Gastrocnemius medialis (tissue), 4 donors: ENCODE measurements at regions of chr4 and their contacts with region 1.

Region 1: DNA sequence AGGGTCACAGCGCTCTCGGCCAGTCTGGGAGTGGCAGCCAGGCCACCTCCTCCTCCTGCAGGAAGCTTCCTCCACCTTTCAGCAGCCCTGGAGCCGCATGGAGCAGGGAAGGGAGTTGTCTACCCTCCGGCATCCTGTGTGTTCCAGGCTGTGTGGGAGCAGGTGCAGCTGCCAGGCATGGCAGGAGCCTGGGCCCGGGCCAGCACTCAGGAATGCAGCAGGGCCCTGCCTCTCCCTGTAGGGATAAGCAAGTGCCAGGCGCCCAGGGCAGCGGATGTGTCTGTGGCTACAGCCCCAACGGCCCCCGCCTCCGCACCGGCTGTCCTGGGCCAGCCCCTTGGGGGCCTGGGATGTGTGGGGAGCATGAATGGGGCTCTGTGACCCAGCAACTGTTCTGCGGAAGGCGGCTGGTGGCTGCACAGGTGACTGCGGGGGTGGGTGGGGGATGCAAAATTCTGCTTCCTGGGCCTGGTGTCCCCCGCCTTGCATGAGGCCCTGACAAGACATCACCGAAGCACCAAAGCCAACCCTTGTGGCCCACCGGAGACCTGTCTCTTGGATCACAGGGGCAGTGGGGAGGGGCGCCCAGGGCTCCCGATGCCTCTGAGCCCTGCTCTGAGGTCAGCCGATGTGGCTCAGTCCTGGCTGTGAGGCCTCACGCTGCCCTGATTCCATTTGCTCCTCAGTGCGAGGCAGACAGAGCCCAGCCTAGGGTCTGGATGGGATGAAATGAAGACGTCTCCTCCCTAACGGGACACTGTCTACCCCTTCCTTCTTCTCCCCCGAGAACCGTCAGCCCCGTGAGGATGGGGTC is 1.4 kb upstream of the DOK7 start:
- DNase-seq: peak; percentile 70 to 95
- ATAC-seq: peak; percentile 43 to 53
- H3K4me3 ChIP-seq: no peak overlapping the region
- H3K27ac ChIP-seq: peak overlapping the region; percentile 94 to 98 (median 94)
- H3K4me1 ChIP-seq: peaks cover 31 to 48% of the 10 kb centered on the region in 2 donors
- H3K27me3 ChIP-seq: no peaks in the 10 kb centered on the region
- CTCF ChIP-seq: no peak
- POLR2A ChIP-seq: peak in 1 of 2 donors; percentile 26

Region 2: DNA sequence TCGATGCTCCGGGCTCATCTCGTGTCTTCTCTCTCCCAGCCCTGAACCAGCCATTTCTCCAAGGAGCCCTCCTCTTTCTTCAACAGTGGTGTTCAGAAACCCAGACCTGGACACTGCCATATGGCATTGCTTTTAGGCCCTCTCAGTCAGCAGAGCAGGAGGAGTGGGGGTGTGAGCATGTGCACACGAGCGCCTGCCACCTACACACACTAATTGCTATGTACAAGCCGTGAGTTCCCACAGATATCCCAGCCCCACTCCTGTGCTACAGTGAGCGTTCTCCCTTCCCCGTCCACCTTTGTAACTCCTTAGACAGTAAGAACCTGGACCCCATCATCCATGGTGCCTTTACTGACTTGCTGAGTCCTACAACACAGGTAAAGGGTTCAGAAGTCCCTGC is 759.3 kb before region 1 on chr4:
- in situ Hi-C with region 1: no loop called
- intact Hi-C with region 1: no loop called
- DNase-seq: no peak
- ATAC-seq: no peak
- H3K4me3 ChIP-seq: no peak overlapping the region
- H3K27ac ChIP-seq: no peak overlapping the region
- H3K4me1 ChIP-seq: no peaks in the 10 kb centered on the region
- H3K27me3 ChIP-seq: no peaks in the 10 kb centered on the region
- CTCF ChIP-seq: no peak
- POLR2A ChIP-seq: no peak

Region 3: GRCh38 chr4:3047464-3048286 is 414.0 kb before region 1 on chr4:
- in situ Hi-C with region 1: no loop called
- intact Hi-C with region 1: no loop called
- DNase-seq: peak; percentile 51 to 85
- ATAC-seq: peak; percentile 80 to 94
- H3K4me3 ChIP-seq: peak overlapping the region; percentile 29 to 57 (median 53)
- H3K27ac ChIP-seq: peak overlapping the region; percentile 51 to 84 (median 74)
- H3K4me1 ChIP-seq: peaks cover 0 to 9% of the 10 kb centered on the region in 2 donors
- H3K27me3 ChIP-seq: no peaks in the 10 kb centered on the region
- CTCF ChIP-seq: peak; percentile 57 to 80 (median 72)
- POLR2A ChIP-seq: no peak

Region 4: GRCh38 chr4:3220476-3221183 is 241.1 kb before region 1 on chr4:
- in situ Hi-C with region 1: loop called in 1 of 4 experiments (anchors 25 kb)
- intact Hi-C with region 1: loop called (anchors 5 kb)
- DNase-seq: peak; percentile 40 to 75
- ATAC-seq: peak; percentile 56 to 71
- H3K4me3 ChIP-seq: no peak overlapping the region
- H3K27ac ChIP-seq: peak overlapping the region; percentile 69 to 81 (median 76)
- H3K4me1 ChIP-seq: peaks cover 18 to 23% of the 10 kb centered on the region in 2 donors
- H3K27me3 ChIP-seq: no peaks in the 10 kb centered on the region
- CTCF ChIP-seq: no peak
- POLR2A ChIP-seq: no peak

Region 5: GRCh38 chr4:3480528-3481112 is 18.9 kb after region 1 on chr4:
- in situ Hi-C with region 1: no loop called
- intact Hi-C with region 1: loop called (anchors 1 kb)
- DNase-seq: peak; percentile 47 to 82
- ATAC-seq: peak in 1 of 2 donors; percentile 22
- H3K4me3 ChIP-seq: no peak overlapping the region
- H3K27ac ChIP-seq: peak overlapping the region; percentile 99 to 100 (median 99)
- H3K4me1 ChIP-seq: peaks cover 49 to 57% of the 10 kb centered on the region in 2 donors
- H3K27me3 ChIP-seq: no peaks in the 10 kb centered on the region
- CTCF ChIP-seq: peak; percentile 98 to 100 (median 99)
- POLR2A ChIP-seq: peak in 1 of 2 donors; percentile 14

Region 6: GRCh38 chr4:3491681-3492405 is 30.2 kb after region 1 on chr4:
- in situ Hi-C with region 1: no loop called
- intact Hi-C with region 1: no loop called
- DNase-seq: no peak
- ATAC-seq: no peak
- H3K4me3 ChIP-seq: no peak overlapping the region
- H3K27ac ChIP-seq: peak overlapping the region in 2 of 4 donors; percentile 6 to 44
- H3K4me1 ChIP-seq: peaks cover 0 to 8% of the 10 kb centered on the region in 2 donors
- H3K27me3 ChIP-seq: no peaks in the 10 kb centered on the region
- CTCF ChIP-seq: no peak
- POLR2A ChIP-seq: no peak